Cardiac septum (tissue), 1 donor: ENCODE measurements at regions of chr2 and their contacts with region 1.

Region 1: GRCh38 chr2:107337209-107337898 is 451.4 kb upstream of the ST6GAL2 start:
- DNase-seq: no peak

Region 2: DNA sequence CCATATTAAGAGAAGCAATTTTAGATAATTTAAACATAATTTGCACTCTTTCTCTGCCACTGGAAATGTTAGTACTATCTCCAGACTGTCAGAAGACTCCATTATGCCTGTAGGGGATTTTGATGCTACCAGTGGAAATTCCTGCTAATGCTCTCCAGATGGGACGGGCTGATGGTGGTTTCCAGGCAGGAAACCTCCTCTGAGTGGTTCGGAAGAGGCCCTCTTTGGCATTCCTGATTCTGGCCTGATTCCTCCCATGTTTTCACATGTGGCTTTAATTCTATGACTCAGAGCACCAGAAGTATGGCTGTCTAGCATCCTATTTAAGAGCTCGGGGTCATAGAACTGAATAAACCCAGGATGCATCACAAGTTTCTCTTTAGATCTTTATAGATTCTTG is 380.5 kb before region 1 on chr2:
- intact Hi-C with region 1: loop called (anchors 10 kb)
- DNase-seq: no peak

Region 3: GRCh38 chr2:107313316-107313715 is 24.0 kb before region 1 on chr2:
- intact Hi-C with region 1: no loop called
- DNase-seq: no peak

Region 4: GRCh38 chr2:107380912-107381311 is 43.6 kb after region 1 on chr2:
- intact Hi-C with region 1: no loop called
- DNase-seq: no peak